ENCODE measurements at regions of chr9 and their contacts with region 1.

Region 1: GRCh38 chr9:32579706-32580331 is 6.9 kb upstream of the NDUFB6 start:
- DNase-seq: peak; percentile 68 to 88 (median 77)
- ATAC-seq: peak; percentile 69
- H3K4me3 ChIP-seq: no peak overlapping the region
- H3K4me3 Mint-ChIP-seq: no peak overlapping the region
- H3K27ac ChIP-seq: no peak overlapping the region
- H3K27ac Mint-ChIP-seq: no peak overlapping the region
- H3K4me1 ChIP-seq: no peaks in the 10 kb centered on the region
- H3K4me1 Mint-ChIP-seq: no peaks in the 10 kb centered on the region
- H3K27me3 ChIP-seq: no peaks in the 10 kb centered on the region
- H3K27me3 Mint-ChIP-seq: peaks cover 34% of the 10 kb centered on the region
- CTCF ChIP-seq: peak; percentile 98

Region 2: GRCh38 chr9:32741706-32742105 is 161.9 kb after region 1 on chr9:
- CTCF ChIA-PET with region 1: no interaction called
- POLR2A ChIA-PET with region 1: no interaction called
- intact Hi-C with region 1: no loop called
- DNase-seq: no peak
- ATAC-seq: no peak
- H3K4me3 ChIP-seq: no peak overlapping the region
- H3K4me3 Mint-ChIP-seq: no peak overlapping the region
- H3K27ac ChIP-seq: no peak overlapping the region
- H3K27ac Mint-ChIP-seq: no peak overlapping the region
- H3K4me1 ChIP-seq: no peaks in the 10 kb centered on the region
- H3K4me1 Mint-ChIP-seq: no peaks in the 10 kb centered on the region
- H3K27me3 ChIP-seq: no peaks in the 10 kb centered on the region
- H3K27me3 Mint-ChIP-seq: no peaks in the 10 kb centered on the region
- CTCF ChIP-seq: no peak

Region 3: DNA sequence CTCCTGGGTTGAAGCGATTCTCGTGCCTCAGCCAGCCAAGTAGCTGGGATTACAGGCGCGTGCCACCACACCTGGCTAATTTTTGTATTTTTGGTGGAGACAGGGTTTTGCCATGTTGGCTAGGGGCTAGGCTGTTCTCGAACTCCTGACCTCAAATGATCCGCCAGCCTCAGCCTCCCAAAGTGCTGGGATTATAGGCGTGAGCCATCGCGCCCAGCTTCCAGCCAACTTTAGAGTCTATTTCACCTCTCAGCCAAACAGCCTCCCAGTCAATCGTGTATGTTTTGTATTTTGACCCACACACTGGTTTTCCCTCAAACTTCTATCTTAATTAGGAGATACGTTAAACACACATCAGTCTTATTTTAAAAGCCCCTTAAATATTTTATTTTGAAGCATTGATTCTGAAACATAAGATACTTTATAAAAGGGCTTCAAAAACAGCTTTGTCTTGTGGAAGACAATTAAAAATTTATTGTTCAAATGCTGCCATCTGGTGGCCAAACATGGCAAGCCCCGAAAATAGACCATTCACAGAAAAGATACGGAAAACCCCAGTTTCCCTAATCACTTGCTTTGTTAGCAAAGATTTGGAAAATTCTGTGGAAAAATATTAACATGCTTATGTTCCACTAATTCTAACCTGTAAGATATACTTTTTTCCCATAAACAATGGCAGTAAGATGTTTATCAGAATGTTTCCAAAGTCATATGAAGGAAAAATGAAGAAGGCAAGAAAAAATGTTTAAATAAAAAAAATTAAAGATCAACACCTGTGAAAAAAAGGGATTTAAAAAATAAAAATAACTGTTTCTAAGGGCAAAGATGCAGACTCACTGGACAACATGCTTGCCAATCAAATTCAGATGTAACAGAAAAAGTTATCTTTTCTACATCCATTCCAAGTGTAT is 388.5 kb after region 1 on chr9:
- CTCF ChIA-PET with region 1: interaction called, 6 read pairs
- POLR2A ChIA-PET with region 1: no interaction called
- intact Hi-C with region 1: loop called (anchors 1 to 2 kb)
- DNase-seq: peak; percentile 26 to 71 (median 48)
- ATAC-seq: no peak
- H3K4me3 ChIP-seq: no peak overlapping the region
- H3K4me3 Mint-ChIP-seq: no peak overlapping the region
- H3K27ac ChIP-seq: no peak overlapping the region
- H3K27ac Mint-ChIP-seq: no peak overlapping the region
- H3K4me1 ChIP-seq: no peaks in the 10 kb centered on the region
- H3K4me1 Mint-ChIP-seq: peaks cover 4% of the 10 kb centered on the region
- H3K27me3 ChIP-seq: no peaks in the 10 kb centered on the region
- H3K27me3 Mint-ChIP-seq: no peaks in the 10 kb centered on the region
- CTCF ChIP-seq: peak; percentile 92

Region 4: GRCh38 chr9:33225319-33226149 is 645.7 kb after region 1 on chr9:
- CTCF ChIA-PET with region 1: no interaction called
- POLR2A ChIA-PET with region 1: no interaction called
- intact Hi-C with region 1: loop called (anchors 5 to 10 kb)
- DNase-seq: peak; percentile 42 to 85 (median 64)
- ATAC-seq: peak; percentile 86
- H3K4me3 ChIP-seq: no peak overlapping the region
- H3K4me3 Mint-ChIP-seq: no peak overlapping the region
- H3K27ac ChIP-seq: no peak overlapping the region
- H3K27ac Mint-ChIP-seq: peak overlapping the region; percentile 2
- H3K4me1 ChIP-seq: peaks cover 10% of the 10 kb centered on the region
- H3K4me1 Mint-ChIP-seq: peaks cover 9% of the 10 kb centered on the region
- H3K27me3 ChIP-seq: no peaks in the 10 kb centered on the region
- H3K27me3 Mint-ChIP-seq: no peaks in the 10 kb centered on the region
- CTCF ChIP-seq: peak; percentile 90

Measured in CD4-positive, alpha-beta T cell (primary cell).